Naive thymus-derived CD4-positive, alpha-beta T cell (primary cell): ENCODE measurements at regions of chr11 and their contacts with region 1.

Region 1: GRCh38 chr11:111878849-111879636 is at the starts of genes CFAP68 and FDXACB1:
- DNase-seq: peak; percentile 89 to 99 (median 98)
- ATAC-seq: peak; percentile 93
- H3K4me3 ChIP-seq: peak within 1 kb of the TSS; percentile 93
- H3K4me3 Mint-ChIP-seq: peak within 1 kb of the TSS; percentile 83 to 99 (median 95)
- H3K27ac ChIP-seq: peak within 1 kb of the TSS; percentile 96
- H3K27ac Mint-ChIP-seq: peak within 1 kb of the TSS; percentile 98 to 100 (median 100)
- H3K4me1 ChIP-seq: peaks cover 7% of the 10 kb centered on the region in 2 donors
- H3K4me1 Mint-ChIP-seq: peaks cover 9 to 32% (median 26%) of the 10 kb centered on the region in 7 donors
- H3K27me3 ChIP-seq: no peaks in the 10 kb centered on the region
- H3K27me3 Mint-ChIP-seq: no peaks in the 10 kb centered on the region
- total RNA-seq, gene CFAP68: 13.7 to 24.9 (median 18.3) TPM
- total RNA-seq, gene FDXACB1: 2.7 to 6.0 (median 5.3) TPM

Region 2: DNA sequence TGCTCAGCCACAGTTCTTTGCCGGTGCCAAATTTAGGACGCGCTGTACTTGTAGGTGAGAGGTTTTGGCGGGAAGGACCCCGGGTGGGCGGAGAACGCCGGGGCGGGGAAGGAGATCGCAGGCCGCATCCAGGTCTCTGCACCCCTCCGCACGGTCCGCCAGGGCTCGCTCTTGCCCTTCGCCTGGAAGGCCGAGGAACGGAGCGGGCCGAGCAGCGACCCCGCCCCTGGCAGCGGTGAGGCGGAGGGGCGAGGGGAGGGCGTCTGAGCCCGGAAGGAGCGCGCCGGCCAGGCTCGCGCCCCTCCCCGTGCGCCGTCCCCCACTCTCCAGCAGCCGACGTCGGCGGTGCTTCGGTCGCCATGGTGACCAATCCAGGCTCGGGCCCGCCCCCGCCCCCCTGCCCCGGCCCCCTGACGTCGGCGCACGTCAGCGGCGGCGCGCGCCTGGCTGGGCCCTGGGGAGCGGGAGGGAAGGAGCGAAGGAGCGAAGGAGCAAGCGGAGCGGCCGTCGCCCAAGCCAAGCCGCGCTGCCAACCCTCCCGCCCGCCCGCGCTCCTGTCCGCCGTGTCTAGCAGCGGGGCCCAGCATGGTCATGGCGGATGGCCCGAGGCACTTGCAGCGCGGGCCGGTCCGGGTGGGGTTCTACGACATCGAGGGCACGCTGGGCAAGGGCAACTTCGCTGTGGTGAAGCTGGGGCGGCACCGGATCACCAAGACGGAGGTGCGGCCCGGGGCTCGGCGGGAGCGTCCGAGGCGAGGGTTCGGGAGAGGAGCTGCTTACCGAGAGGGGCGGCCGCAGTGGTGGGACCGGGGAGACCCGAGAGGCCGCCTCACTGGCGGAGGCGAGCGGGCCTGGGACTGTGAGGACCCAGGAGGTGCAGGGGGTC is 276.8 kb before region 1 on chr11 and contains the start of gene SIK2:
- CTCF ChIA-PET with region 1: no interaction called
- POLR2A ChIA-PET with region 1: no interaction called
- intact Hi-C with region 1: loop called (anchors 1 kb)
- DNase-seq: peak; percentile 77 to 90 (median 81)
- ATAC-seq: peak; percentile 93
- H3K4me3 ChIP-seq: peak within 1 kb of the TSS; percentile 77
- H3K4me3 Mint-ChIP-seq: peak within 1 kb of the TSS; percentile 92 to 99 (median 96)
- H3K27ac ChIP-seq: peak within 1 kb of the TSS; percentile 93
- H3K27ac Mint-ChIP-seq: peak within 1 kb of the TSS; percentile 84 to 99 (median 95)
- H3K4me1 ChIP-seq: peaks cover 8 to 11% of the 10 kb centered on the region in 2 donors
- H3K4me1 Mint-ChIP-seq: peaks cover 16 to 33% (median 25%) of the 10 kb centered on the region in 7 donors
- H3K27me3 ChIP-seq: no peaks in the 10 kb centered on the region
- H3K27me3 Mint-ChIP-seq: peaks cover 0 to 6% (median 0%) of the 10 kb centered on the region in 5 donors
- total RNA-seq, gene SIK2: 7.3 to 12.9 (median 9.8) TPM

Region 3: GRCh38 chr11:111833524-111833923 is 45.5 kb before region 1 on chr11:
- CTCF ChIA-PET with region 1: no interaction called
- POLR2A ChIA-PET with region 1: no interaction called
- intact Hi-C with region 1: no loop called
- DNase-seq: no peak
- ATAC-seq: no peak
- H3K4me3 ChIP-seq: no peak overlapping the region
- H3K4me3 Mint-ChIP-seq: no peak overlapping the region
- H3K27ac ChIP-seq: no peak overlapping the region
- H3K27ac Mint-ChIP-seq: no peak overlapping the region
- H3K4me1 ChIP-seq: no peaks in the 10 kb centered on the region
- H3K4me1 Mint-ChIP-seq: peaks cover 0 to 15% (median 0%) of the 10 kb centered on the region in 7 donors
- H3K27me3 ChIP-seq: no peaks in the 10 kb centered on the region
- H3K27me3 Mint-ChIP-seq: no peaks in the 10 kb centered on the region

Region 4: DNA sequence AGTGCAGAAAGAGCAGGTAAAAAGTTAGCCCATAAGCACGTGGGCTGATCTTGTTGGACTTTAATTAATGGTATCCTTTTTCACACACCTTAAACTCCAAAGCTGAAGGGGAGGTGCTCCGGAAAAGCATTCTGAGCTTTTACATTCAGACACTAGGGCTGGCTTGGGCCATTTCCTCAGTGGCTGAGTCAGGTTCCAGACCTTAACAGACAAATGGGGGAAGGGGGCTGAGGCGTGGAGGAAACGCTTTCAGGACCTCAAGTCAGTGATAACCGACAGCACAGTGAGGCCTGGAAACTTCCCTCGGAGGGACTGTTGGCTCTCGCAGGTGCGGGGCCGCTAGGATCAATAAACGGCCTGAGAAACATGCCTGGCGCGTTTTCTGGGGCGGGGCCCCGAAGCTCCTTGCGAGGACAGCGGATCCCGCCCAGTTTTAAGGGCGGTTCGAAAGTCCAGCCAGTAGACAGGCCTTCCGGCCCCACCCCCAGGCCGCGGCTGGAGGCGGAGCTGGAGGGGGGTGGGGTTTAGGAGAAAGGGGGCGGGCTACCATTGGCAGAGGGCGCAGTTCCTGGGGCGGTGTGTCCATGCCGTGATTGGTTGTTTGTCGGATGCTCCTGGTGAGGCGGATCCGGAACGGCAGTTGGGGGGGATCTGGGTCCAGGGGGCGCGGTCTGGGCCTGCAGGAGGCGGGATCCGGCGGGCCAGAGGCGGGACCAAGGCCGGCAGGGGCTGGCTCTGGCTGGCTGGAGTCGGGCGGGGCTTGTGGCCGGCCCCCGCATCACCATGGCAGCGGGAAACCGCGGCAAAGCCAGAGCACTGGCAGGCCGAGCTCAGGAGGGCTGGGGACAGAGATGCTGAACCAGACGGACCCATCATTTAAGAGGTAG is 47.7 kb after region 1 on chr11:
- CTCF ChIA-PET with region 1: interaction called, 4 read pairs
- POLR2A ChIA-PET with region 1: interaction called, 17 read pairs
- intact Hi-C with region 1: loop called (anchors 1 kb)
- DNase-seq: peak; percentile 91 to 98 (median 96)
- ATAC-seq: peak; percentile 96
- H3K4me3 ChIP-seq: peak overlapping the region; percentile 61
- H3K4me3 Mint-ChIP-seq: peak overlapping the region; percentile 76 to 91 (median 87)
- H3K27ac ChIP-seq: peak overlapping the region; percentile 76
- H3K27ac Mint-ChIP-seq: peak overlapping the region; percentile 83 to 96 (median 92)
- H3K4me1 ChIP-seq: peaks cover 0 to 5% of the 10 kb centered on the region in 2 donors
- H3K4me1 Mint-ChIP-seq: peaks cover 0 to 19% (median 16%) of the 10 kb centered on the region in 7 donors
- H3K27me3 ChIP-seq: no peaks in the 10 kb centered on the region
- H3K27me3 Mint-ChIP-seq: peaks cover 0 to 5% (median 0%) of the 10 kb centered on the region in 5 donors

Region 5: GRCh38 chr11:112024773-112025678 is 146.0 kb after region 1 on chr11 and contains the start of gene DLAT:
- CTCF ChIA-PET with region 1: no interaction called
- POLR2A ChIA-PET with region 1: no interaction called
- intact Hi-C with region 1: loop called (anchors 1 kb)
- DNase-seq: peak; percentile 66 to 87 (median 85)
- ATAC-seq: peak; percentile 95
- H3K4me3 ChIP-seq: peak within 1 kb of the TSS; percentile 100
- H3K4me3 Mint-ChIP-seq: peak within 1 kb of the TSS; percentile 97 to 100 (median 99)
- H3K27ac ChIP-seq: peak within 1 kb of the TSS; percentile 93
- H3K27ac Mint-ChIP-seq: peak within 1 kb of the TSS; percentile 96 to 100 (median 98)
- H3K4me1 ChIP-seq: peaks cover 0 to 7% of the 10 kb centered on the region in 2 donors
- H3K4me1 Mint-ChIP-seq: peaks cover 14 to 39% (median 30%) of the 10 kb centered on the region in 7 donors
- H3K27me3 ChIP-seq: no peaks in the 10 kb centered on the region
- H3K27me3 Mint-ChIP-seq: no peaks in the 10 kb centered on the region
- total RNA-seq, gene DLAT: 13.1 to 31.0 (median 17.8) TPM

Region 6: GRCh38 chr11:112086422-112087191 is 207.6 kb after region 1 on chr11 and contains the starts of genes SDHD and TIMM8B:
- CTCF ChIA-PET with region 1: no interaction called
- POLR2A ChIA-PET with region 1: interaction called, 6 read pairs
- intact Hi-C with region 1: loop called (anchors 1 kb)
- DNase-seq: peak; percentile 90 to 98 (median 97)
- ATAC-seq: peak; percentile 94
- H3K4me3 ChIP-seq: peak within 1 kb of the TSS; percentile 99
- H3K4me3 Mint-ChIP-seq: peak within 1 kb of the TSS; percentile 90 to 100 (median 98)
- H3K27ac ChIP-seq: peak within 1 kb of the TSS; percentile 76
- H3K27ac Mint-ChIP-seq: peak within 1 kb of the TSS; percentile 92 to 99 (median 96)
- H3K4me1 ChIP-seq: peaks cover 21 to 23% of the 10 kb centered on the region in 2 donors
- H3K4me1 Mint-ChIP-seq: peaks cover 44 to 69% (median 62%) of the 10 kb centered on the region in 7 donors
- H3K27me3 ChIP-seq: no peaks in the 10 kb centered on the region
- H3K27me3 Mint-ChIP-seq: peaks cover 0 to 2% (median 0%) of the 10 kb centered on the region in 5 donors
- total RNA-seq, gene SDHD: 39.6 to 84.4 (median 65.8) TPM
- total RNA-seq, gene TIMM8B: 15.5 to 61.1 (median 24.3) TPM

Region 7: GRCh38 chr11:112280268-112281126 is 401.5 kb after region 1 on chr11:
- CTCF ChIA-PET with region 1: no interaction called
- POLR2A ChIA-PET with region 1: interaction called, 3 read pairs
- intact Hi-C with region 1: loop called (anchors 1 to 5 kb)
- DNase-seq: peak; percentile 27 to 81 (median 73)
- ATAC-seq: peak; percentile 95
- H3K4me3 ChIP-seq: peak overlapping the region; percentile 78
- H3K4me3 Mint-ChIP-seq: peak overlapping the region; percentile 91 to 97 (median 94)
- H3K27ac ChIP-seq: peak overlapping the region; percentile 31
- H3K27ac Mint-ChIP-seq: peak overlapping the region; percentile 46 to 86 (median 66)
- H3K4me1 ChIP-seq: no peaks in the 10 kb centered on the region
- H3K4me1 Mint-ChIP-seq: peaks cover 7 to 36% (median 10%) of the 10 kb centered on the region in 7 donors
- H3K27me3 ChIP-seq: no peaks in the 10 kb centered on the region
- H3K27me3 Mint-ChIP-seq: no peaks in the 10 kb centered on the region

Region 8: GRCh38 chr11:113875234-113876073 is 1996.4 kb after region 1 on chr11 and contains the start of gene USP28:
- CTCF ChIA-PET with region 1: no interaction called
- POLR2A ChIA-PET with region 1: no interaction called
- intact Hi-C with region 1: loop called in 1 of 2 experiments (anchors 10 kb)
- DNase-seq: peak; percentile 49 to 92 (median 73)
- ATAC-seq: peak; percentile 97
- H3K4me3 ChIP-seq: peak within 1 kb of the TSS; percentile 79
- H3K4me3 Mint-ChIP-seq: peak within 1 kb of the TSS; percentile 88 to 100 (median 98)
- H3K27ac ChIP-seq: peak within 1 kb of the TSS; percentile 78
- H3K27ac Mint-ChIP-seq: peak within 1 kb of the TSS; percentile 91 to 99 (median 98)
- H3K4me1 ChIP-seq: no peaks in the 10 kb centered on the region
- H3K4me1 Mint-ChIP-seq: peaks cover 34 to 59% (median 54%) of the 10 kb centered on the region in 7 donors
- H3K27me3 ChIP-seq: no peaks in the 10 kb centered on the region
- H3K27me3 Mint-ChIP-seq: no peaks in the 10 kb centered on the region
- total RNA-seq, gene USP28: 12.0 to 50.3 (median 19.0) TPM